Activated CD4-positive, alpha-beta memory T cell treated with anti-CD3 and anti-CD28 coated beads for 36 hours (primary cell): ENCODE measurements at regions of chr6 and their contacts with region 1.

Region 1: DNA sequence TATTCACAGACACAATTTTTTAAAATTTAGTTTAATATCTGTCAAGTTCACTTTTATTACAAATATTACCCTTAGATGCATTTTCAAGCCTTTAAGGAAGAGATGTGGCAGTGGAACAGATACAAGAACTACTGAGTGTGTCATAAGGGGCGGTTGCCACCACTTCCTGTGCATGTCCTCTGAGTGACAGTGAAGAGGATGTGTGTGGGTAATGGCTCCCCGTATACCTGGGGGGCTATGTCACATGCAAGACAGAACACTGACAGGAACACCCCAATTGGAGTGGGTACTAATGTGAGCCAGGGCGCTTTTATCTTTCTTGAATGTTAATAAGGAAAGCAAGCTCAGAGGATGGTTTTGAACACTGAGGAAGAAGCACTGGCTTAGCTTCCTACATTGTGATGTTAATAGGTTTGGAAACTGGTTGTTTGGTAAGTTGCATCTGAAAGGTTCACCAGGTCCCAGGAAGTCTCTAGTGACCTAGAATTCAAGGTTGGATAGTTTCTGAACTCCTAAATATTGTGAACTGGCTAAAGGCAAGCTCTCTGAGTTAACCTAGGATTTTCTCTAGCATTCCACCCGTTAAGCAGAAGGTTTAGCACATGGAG is 83.4 kb upstream of the ASF1A start:
- DNase-seq: peak; percentile 77
- H3K4me3 Mint-ChIP-seq: no peak overlapping the region
- H3K27ac Mint-ChIP-seq: peak overlapping the region; percentile 77
- H3K4me1 Mint-ChIP-seq: peaks cover 55% of the 10 kb centered on the region
- H3K27me3 Mint-ChIP-seq: no peaks in the 10 kb centered on the region

Region 2: DNA sequence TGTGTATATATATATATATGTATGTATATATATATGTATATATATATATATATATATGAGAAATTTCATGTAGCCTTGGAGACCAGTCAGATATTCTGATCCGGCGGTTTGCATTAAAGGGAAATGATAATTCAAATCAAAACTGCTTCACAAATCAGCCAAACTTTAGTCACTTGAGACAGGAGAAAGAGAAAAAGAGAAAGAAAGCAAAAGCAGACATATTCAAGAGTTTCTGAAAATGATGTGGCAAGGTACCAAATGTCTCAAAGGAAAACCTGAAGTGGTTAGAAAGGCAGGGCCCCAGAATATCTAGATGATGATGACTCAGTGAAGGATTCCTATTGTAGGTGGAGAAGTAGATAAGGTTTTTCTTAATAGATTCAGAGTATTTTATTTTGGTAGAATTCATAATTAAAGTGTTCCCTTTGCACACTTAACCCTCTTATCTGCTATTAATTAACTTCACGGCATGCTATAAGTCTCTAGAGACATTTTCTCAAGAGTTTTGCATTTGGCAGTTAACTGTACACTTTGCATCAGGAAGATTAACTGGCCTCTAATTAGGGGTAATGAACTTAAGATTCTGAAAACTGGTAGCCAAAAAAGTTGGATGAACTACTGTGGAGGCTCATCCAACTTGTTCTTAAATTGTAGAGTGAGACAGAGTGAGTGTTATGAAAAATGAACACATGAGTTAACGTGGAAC is 33.3 kb after region 1 on chr6:
- CTCF ChIA-PET with region 1: interaction called, 5 read pairs
- POLR2A ChIA-PET with region 1: no interaction called
- intact Hi-C with region 1: loop called (anchors 1 kb)
- DNase-seq: no peak
- H3K4me3 Mint-ChIP-seq: peak overlapping the region; percentile 33
- H3K27ac Mint-ChIP-seq: peak overlapping the region; percentile 34
- H3K4me1 Mint-ChIP-seq: peaks cover 32% of the 10 kb centered on the region
- H3K27me3 Mint-ChIP-seq: no peaks in the 10 kb centered on the region